Activated CD4-positive, alpha-beta T cell treated with anti-CD3 and anti-CD28 coated beads, Interleukin-2, amount 10 ng/mL, durations not matched to agents 24 days and 14 days (primary cell): ENCODE measurements at regions of chr3 and their contacts with region 1.

Region 1: GRCh38 chr3:120596116-120596852 is at the start of gene NDUFB4:
- DNase-seq: peak; percentile 98
- H3K4me3 Mint-ChIP-seq: peak within 1 kb of the TSS; percentile 91
- H3K27ac Mint-ChIP-seq: peak within 1 kb of the TSS; percentile 94
- H3K4me1 Mint-ChIP-seq: peaks cover 15% of the 10 kb centered on the region
- H3K27me3 Mint-ChIP-seq: peaks cover 14% of the 10 kb centered on the region
- total RNA-seq, gene NDUFB4: 116 and 123 TPM in 2 replicates

Region 2: GRCh38 chr3:119702530-119703157 is 893.6 kb before region 1 on chr3 and contains the start of gene CFAP91:
- intact Hi-C with region 1: loop called (anchors 5 kb)
- DNase-seq: peak; percentile 94
- H3K4me3 Mint-ChIP-seq: peak within 1 kb of the TSS; percentile 83
- H3K27ac Mint-ChIP-seq: peak within 1 kb of the TSS; percentile 40
- H3K4me1 Mint-ChIP-seq: peaks cover 29% of the 10 kb centered on the region
- H3K27me3 Mint-ChIP-seq: peaks cover 27% of the 10 kb centered on the region
- total RNA-seq, gene CFAP91: 0.26 TPM in 1 of 2 replicates, not detected in the other

Region 3: DNA sequence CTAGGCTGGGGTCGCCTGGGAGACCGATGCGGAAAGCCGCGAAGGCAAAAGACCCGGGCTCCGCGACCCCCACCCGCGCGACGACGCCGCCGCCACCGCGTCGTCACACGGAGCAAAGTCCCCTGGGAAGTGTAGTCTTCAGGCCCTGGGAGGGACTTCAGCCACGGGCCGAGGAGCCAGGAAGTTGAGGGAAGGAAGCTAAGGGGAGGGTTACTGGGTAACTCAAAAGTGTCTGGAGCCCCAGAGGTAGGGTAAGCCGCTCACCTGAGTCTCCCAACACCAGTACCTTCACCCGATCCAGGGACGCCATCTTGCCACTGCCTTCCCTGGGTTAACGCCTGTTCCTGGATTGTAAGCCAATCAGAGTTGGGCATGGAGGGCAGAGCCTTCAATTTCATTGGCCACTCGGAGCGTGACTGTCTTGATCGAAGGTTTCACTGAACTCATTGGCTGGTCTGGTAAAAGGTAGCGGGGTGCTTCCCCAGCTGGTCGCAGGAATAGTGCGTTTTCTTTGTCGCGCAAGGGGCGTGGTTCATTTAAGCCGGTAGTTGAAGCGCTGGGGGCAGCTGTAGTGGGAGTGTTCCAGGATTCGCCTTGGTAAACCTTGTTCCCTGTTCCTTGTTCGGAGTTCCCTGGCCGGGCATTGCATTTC is 146.0 kb after region 1 on chr3 and contains the starts of genes GTF2E1 and RABL3:
- intact Hi-C with region 1: loop called (anchors 1 kb)
- DNase-seq: peak; percentile 99
- H3K4me3 Mint-ChIP-seq: peak within 1 kb of the TSS; percentile 97
- H3K27ac Mint-ChIP-seq: peak within 1 kb of the TSS; percentile 98
- H3K4me1 Mint-ChIP-seq: peaks cover 25% of the 10 kb centered on the region
- H3K27me3 Mint-ChIP-seq: peaks cover 2% of the 10 kb centered on the region
- total RNA-seq, gene GTF2E1: 25.9 and 27.8 TPM in 2 replicates
- total RNA-seq, gene RABL3: 27.6 and 29.3 TPM in 2 replicates

Region 4: DNA sequence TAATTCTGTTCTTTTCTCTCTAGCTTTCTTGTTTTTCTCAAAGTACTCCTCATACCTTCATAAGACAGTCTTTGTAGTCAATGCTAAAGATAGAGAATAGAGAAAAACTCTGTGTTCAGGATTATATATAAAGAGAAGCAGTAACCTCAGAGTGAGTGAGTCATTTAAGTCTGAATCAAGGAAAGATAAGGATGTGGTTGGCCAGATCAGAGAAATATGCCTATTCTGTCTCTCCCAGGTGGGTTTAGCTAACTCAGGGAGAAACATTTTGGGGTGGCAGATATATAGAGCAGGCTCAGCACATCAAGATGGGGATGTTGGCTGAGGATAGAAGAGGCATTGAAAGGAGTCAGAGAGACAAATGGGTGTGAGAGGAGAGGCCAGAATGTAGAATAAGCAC is 177.6 kb after region 1 on chr3:
- intact Hi-C with region 1: loop called (anchors 10 kb)
- DNase-seq: peak; percentile 73
- H3K4me3 Mint-ChIP-seq: no peak overlapping the region
- H3K27ac Mint-ChIP-seq: no peak overlapping the region
- H3K4me1 Mint-ChIP-seq: peaks cover 10% of the 10 kb centered on the region
- H3K27me3 Mint-ChIP-seq: no peaks in the 10 kb centered on the region